B cell (primary cell): ENCODE measurements at regions of chr1 and their contacts with region 1.

Region 1: DNA sequence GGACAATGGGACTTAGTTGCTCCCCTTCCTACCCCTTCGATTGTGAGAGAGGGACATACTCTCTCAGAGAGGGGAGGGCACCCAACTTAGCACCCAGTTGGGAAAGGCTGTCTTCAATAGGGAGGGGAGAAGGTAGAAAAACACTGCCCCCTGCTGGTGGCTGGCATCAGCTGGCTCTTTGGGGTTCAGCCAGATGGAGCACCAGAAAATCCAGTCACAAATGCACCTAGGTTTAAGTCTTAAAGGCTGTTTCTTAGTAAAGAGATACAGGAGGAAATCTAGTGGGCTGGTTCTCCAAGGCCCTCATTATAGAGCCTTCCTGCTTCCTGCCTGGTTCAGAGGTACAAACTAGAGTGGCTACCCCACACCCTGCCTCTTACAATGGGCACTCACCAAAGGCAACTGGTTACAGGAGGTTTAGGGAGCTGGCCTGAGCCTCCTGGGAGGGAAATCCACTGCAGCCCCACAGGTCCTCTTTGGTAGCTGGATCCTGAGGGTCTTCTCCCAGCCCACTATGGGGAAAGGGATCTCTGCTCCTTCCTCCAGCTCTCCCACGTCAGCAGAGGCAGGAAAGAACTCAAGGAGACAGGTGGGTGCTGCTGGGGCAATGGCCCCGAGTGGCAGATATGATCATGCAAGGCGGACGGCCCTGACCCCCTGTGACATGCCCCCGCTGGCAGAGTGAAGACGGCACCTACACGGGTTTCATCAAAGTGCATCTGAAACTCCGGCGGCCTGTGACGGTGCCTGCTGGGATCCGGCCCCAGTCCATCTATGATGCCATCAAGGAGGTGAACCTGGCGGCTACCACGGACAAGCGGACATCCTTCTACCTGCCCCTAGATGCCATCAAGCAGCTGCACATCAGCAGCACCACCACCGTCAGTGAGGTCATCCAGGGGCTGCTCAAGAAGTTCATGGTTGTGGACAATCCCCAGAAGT is 28.3 kb downstream of the EIF2D start:
- DNase-seq: peak; percentile 86
- ATAC-seq: no peak
- H3K4me3 ChIP-seq: no peak overlapping the region
- H3K4me3 Mint-ChIP-seq: peak overlapping the region; percentile 70
- H3K27ac ChIP-seq: peak overlapping the region in 1 of 2 donors; percentile 96
- H3K27ac Mint-ChIP-seq: peak overlapping the region; percentile 98
- H3K4me1 ChIP-seq: peaks cover 46 to 50% of the 10 kb centered on the region in 2 donors
- H3K4me1 Mint-ChIP-seq: peaks cover 49% of the 10 kb centered on the region
- H3K27me3 ChIP-seq: no peaks in the 10 kb centered on the region
- H3K27me3 Mint-ChIP-seq: no peaks in the 10 kb centered on the region
- CTCF ChIP-seq: peak; percentile 94

Region 2: DNA sequence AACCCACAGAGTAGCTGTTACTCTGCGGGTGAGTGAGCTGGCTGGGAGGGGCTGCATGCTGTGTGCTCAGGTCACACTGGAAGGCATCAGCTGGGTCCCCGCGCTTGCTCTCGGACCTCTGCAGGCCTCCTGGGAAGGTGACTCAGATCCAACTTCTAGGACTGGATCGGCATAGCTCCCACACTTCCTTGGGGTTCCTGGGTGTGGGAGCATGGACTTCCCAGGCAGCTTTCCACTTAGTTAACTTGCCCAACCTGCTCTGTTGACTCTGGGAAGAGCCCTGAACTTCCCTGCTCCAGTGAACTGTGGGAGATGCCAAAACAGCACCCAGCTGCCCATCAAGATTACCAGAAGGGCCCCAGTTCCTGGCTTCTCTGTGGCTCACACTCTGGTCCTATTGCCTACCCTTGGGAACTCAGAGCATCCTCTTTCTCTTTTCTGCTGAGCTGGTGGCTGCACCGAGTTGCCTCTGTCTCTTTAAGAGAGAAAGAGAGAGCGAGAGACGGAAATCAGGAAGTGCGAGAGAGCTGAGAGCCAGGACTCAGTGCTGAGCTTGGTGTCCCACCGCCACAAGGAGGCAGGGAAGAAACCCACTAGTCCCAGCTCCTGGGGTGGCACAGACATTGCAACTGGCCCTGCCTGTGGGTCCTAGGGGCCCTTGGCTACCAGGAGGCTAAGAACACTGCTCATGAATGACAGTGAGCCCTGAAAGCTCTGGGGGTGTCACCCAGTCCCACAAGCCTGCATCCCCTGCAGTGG is 113.9 kb before region 1 on chr1 and contains the start of gene IKBKE:
- CTCF ChIA-PET with region 1: interaction called, 11 read pairs
- POLR2A ChIA-PET with region 1: no interaction called
- intact Hi-C with region 1: no loop called
- DNase-seq: peak; percentile 77
- ATAC-seq: peak; percentile 65
- H3K4me3 ChIP-seq: peak within 1 kb of the TSS; percentile 62 to 97 (median 85)
- H3K4me3 Mint-ChIP-seq: peak within 1 kb of the TSS; percentile 88
- H3K27ac ChIP-seq: peak within 1 kb of the TSS; percentile 63 to 75
- H3K27ac Mint-ChIP-seq: peak within 1 kb of the TSS; percentile 85
- H3K4me1 ChIP-seq: peaks cover 63 to 74% of the 10 kb centered on the region in 2 donors
- H3K4me1 Mint-ChIP-seq: peaks cover 73% of the 10 kb centered on the region
- H3K27me3 ChIP-seq: no peaks in the 10 kb centered on the region
- H3K27me3 Mint-ChIP-seq: no peaks in the 10 kb centered on the region
- CTCF ChIP-seq: peak; percentile 30
- total RNA-seq, gene IKBKE: 40.5 and 40.8 TPM in 2 replicates

Region 3: GRCh38 chr1:206489980-206490770 is 93.8 kb before region 1 on chr1:
- CTCF ChIA-PET with region 1: interaction called, 81 read pairs
- POLR2A ChIA-PET with region 1: no interaction called
- intact Hi-C with region 1: loop called (anchors 1 kb)
- DNase-seq: peak; percentile 73
- ATAC-seq: peak; percentile 80
- H3K4me3 ChIP-seq: no peak overlapping the region
- H3K4me3 Mint-ChIP-seq: no peak overlapping the region
- H3K27ac ChIP-seq: no peak overlapping the region
- H3K27ac Mint-ChIP-seq: no peak overlapping the region
- H3K4me1 ChIP-seq: peaks cover 4 to 5% of the 10 kb centered on the region in 2 donors
- H3K4me1 Mint-ChIP-seq: peaks cover 7% of the 10 kb centered on the region
- H3K27me3 ChIP-seq: no peaks in the 10 kb centered on the region
- H3K27me3 Mint-ChIP-seq: no peaks in the 10 kb centered on the region
- CTCF ChIP-seq: peak; percentile 83

Region 4: GRCh38 chr1:206507284-206508129 is 76.5 kb before region 1 on chr1 and contains the start of gene RASSF5:
- CTCF ChIA-PET with region 1: interaction called, 10 read pairs
- POLR2A ChIA-PET with region 1: interaction called, 4 read pairs
- intact Hi-C with region 1: no loop called
- DNase-seq: peak; percentile 84
- ATAC-seq: peak; percentile 91
- H3K4me3 ChIP-seq: peak within 1 kb of the TSS; percentile 28 to 75 (median 64)
- H3K4me3 Mint-ChIP-seq: peak within 1 kb of the TSS; percentile 86
- H3K27ac ChIP-seq: no peak within 1 kb of the TSS
- H3K27ac Mint-ChIP-seq: peak within 1 kb of the TSS; percentile 10
- H3K4me1 ChIP-seq: peaks cover 19 to 21% of the 10 kb centered on the region in 2 donors
- H3K4me1 Mint-ChIP-seq: peaks cover 28% of the 10 kb centered on the region
- H3K27me3 ChIP-seq: peaks cover 0 to 50% (median 19%) of the 10 kb centered on the region in 4 experiments
- H3K27me3 Mint-ChIP-seq: peaks cover 32% of the 10 kb centered on the region
- CTCF ChIP-seq: no peak
- total RNA-seq, gene RASSF5: 144 and 146 TPM in 2 replicates

Region 5: DNA sequence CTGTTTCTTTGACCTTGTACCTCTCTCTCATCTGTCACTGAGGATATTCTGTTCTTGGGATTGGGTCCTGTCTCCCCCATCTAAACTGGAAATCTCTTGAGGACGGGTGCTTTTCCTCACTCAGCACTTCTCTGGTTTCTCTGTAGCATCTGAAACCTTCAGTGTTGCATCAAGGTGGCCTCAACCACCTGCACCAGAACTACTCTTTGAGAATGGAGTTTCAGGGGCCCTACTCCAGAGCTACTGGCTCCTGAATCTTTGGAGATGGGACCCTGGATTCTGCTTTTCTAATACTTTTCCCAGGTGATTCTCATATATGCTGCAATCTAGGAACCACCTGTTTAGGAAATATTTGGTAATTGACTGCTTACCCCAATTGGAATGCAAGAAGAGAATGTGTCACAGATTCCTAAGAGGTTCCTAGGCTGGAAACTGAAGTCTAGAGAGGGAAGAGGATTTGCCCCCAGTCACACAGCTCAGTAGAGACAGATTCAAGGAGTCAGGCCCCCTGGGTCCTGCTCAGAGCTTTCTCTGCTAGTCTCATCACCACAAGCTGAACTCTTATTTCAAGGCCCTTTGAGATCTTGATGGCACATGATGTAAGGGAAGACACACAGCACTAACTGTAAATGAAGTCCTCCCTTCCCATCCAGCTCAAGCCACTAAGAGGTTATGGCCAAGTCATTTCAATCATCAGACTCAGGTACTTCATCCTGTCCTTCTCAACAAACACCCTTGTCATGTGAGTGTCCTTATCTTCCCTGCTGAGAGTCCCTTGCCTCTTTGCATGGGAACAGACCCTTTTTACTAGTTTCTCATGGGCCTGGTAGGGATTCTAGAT is 20.4 kb before region 1 on chr1:
- CTCF ChIA-PET with region 1: interaction called, 1,018 read pairs
- POLR2A ChIA-PET with region 1: interaction called, 9 read pairs
- intact Hi-C with region 1: loop called (anchors 1 kb)
- DNase-seq: no peak
- ATAC-seq: no peak
- H3K4me3 ChIP-seq: peak overlapping the region in 3 of 5 experiments; percentile 6 to 15 (median 11)
- H3K4me3 Mint-ChIP-seq: peak overlapping the region; percentile 78
- H3K27ac ChIP-seq: peak overlapping the region; percentile 60 to 77
- H3K27ac Mint-ChIP-seq: peak overlapping the region; percentile 92
- H3K4me1 ChIP-seq: peaks cover 86 to 98% of the 10 kb centered on the region in 2 donors
- H3K4me1 Mint-ChIP-seq: peaks cover 94% of the 10 kb centered on the region
- H3K27me3 ChIP-seq: no peaks in the 10 kb centered on the region
- H3K27me3 Mint-ChIP-seq: no peaks in the 10 kb centered on the region
- CTCF ChIP-seq: no peak

Region 6: GRCh38 chr1:207751790-207752455 is 1167.9 kb after region 1 on chr1 and contains the start of gene CD46:
- CTCF ChIA-PET with region 1: no interaction called
- POLR2A ChIA-PET with region 1: no interaction called
- intact Hi-C with region 1: no loop called
- DNase-seq: peak; percentile 94
- ATAC-seq: peak; percentile 98
- H3K4me3 ChIP-seq: peak within 1 kb of the TSS; percentile 70 to 91 (median 81)
- H3K4me3 Mint-ChIP-seq: peak within 1 kb of the TSS; percentile 99
- H3K27ac ChIP-seq: peak within 1 kb of the TSS; percentile 81 to 89
- H3K27ac Mint-ChIP-seq: peak within 1 kb of the TSS; percentile 98
- H3K4me1 ChIP-seq: peaks cover 18 to 26% of the 10 kb centered on the region in 2 donors
- H3K4me1 Mint-ChIP-seq: peaks cover 49% of the 10 kb centered on the region
- H3K27me3 ChIP-seq: no peaks in the 10 kb centered on the region
- H3K27me3 Mint-ChIP-seq: no peaks in the 10 kb centered on the region
- CTCF ChIP-seq: no peak
- total RNA-seq, gene CD46: 168 and 173 TPM in 2 replicates